Mammary epithelial cell (primary cell): ENCODE measurements at regions of chr17 and their contacts with region 1.

Region 1: DNA sequence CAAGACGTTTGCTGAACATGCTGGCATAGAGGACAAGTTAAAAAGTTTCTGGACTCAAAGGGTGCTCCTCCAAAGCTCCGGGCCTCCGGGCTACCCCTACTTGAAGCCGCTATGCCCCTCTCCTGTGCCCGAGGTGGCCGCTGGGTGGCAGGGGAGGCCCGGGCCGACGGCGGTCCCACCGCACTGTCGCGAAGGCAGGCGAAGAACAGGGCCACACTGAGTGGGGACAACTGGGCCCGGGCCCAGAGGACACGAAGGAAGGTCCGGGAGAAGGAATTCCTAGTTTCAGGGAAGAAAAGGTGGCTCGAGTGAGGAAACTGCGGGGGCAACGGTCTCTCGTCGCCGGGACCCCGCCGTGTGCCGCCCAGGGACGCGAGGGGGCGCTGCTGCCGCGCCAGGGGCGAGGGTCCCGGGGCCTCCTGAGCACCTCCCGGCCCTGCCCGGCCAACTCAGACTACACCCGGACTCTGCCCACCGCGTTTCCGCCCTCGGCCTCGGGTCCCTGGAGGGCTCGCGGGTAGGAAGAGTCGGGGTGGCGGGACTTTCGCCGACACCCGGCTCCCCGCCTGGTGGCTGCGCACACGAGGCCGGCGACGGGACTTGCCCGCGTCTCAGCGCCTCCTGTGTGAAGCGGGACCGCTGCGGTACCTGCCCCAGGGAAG is 885 bp upstream of the CHCT1 start:
- DNase-seq: peak; percentile 26
- H3K4me3 ChIP-seq: peak overlapping the region; percentile 29 to 45 (median 35)
- H3K27ac ChIP-seq: no peak overlapping the region
- H3K4me1 ChIP-seq: peaks cover 9% of the 10 kb centered on the region
- H3K27me3 ChIP-seq: no peaks in the 10 kb centered on the region
- CTCF ChIP-seq: peak; percentile 35 to 74

Region 2: GRCh38 chr17:60065136-60065535 is 356.3 kb before region 1 on chr17:
- CTCF ChIA-PET with region 1: no interaction called
- dilution Hi-C with region 1: no loop called
- in situ Hi-C with region 1: no loop called
- intact Hi-C with region 1: no loop called
- DNase-seq: peak; percentile 35
- H3K4me3 ChIP-seq: no peak overlapping the region
- H3K27ac ChIP-seq: no peak overlapping the region
- H3K4me1 ChIP-seq: peaks cover 11% of the 10 kb centered on the region
- H3K27me3 ChIP-seq: no peaks in the 10 kb centered on the region
- CTCF ChIP-seq: no peak

Region 3: GRCh38 chr17:60327122-60327900 is 94.1 kb before region 1 on chr17:
- CTCF ChIA-PET with region 1: no interaction called
- dilution Hi-C with region 1: loop called (anchors 5 kb)
- in situ Hi-C with region 1: no loop called
- intact Hi-C with region 1: no loop called
- DNase-seq: no peak
- H3K4me3 ChIP-seq: no peak overlapping the region
- H3K27ac ChIP-seq: no peak overlapping the region
- H3K4me1 ChIP-seq: no peaks in the 10 kb centered on the region
- H3K27me3 ChIP-seq: no peaks in the 10 kb centered on the region
- CTCF ChIP-seq: no peak

Region 4: GRCh38 chr17:60947100-60947499 is 525.7 kb after region 1 on chr17:
- CTCF ChIA-PET with region 1: no interaction called
- dilution Hi-C with region 1: no loop called
- in situ Hi-C with region 1: no loop called
- intact Hi-C with region 1: no loop called
- DNase-seq: no peak
- H3K4me3 ChIP-seq: no peak overlapping the region
- H3K27ac ChIP-seq: no peak overlapping the region
- H3K4me1 ChIP-seq: no peaks in the 10 kb centered on the region
- H3K27me3 ChIP-seq: no peaks in the 10 kb centered on the region
- CTCF ChIP-seq: no peak